ENCODE measurements at regions of chr16 and their contacts with region 1.

Region 1: GRCh38 chr16:80580109-80580832 is 39.5 kb downstream of the DYNLRB2 start:
- DNase-seq: peak; percentile 94
- H3K4me3 Mint-ChIP-seq: peak overlapping the region; percentile 80
- H3K27ac Mint-ChIP-seq: peak overlapping the region; percentile 96
- H3K4me1 Mint-ChIP-seq: peaks cover 58% of the 10 kb centered on the region
- H3K27me3 Mint-ChIP-seq: no peaks in the 10 kb centered on the region

Region 2: GRCh38 chr16:78778101-78779004 is 1801.9 kb before region 1 on chr16:
- intact Hi-C with region 1: loop called (anchors 5 kb)
- DNase-seq: peak; percentile 87
- H3K4me3 Mint-ChIP-seq: peak overlapping the region; percentile 63
- H3K27ac Mint-ChIP-seq: peak overlapping the region; percentile 94
- H3K4me1 Mint-ChIP-seq: peaks cover 53% of the 10 kb centered on the region
- H3K27me3 Mint-ChIP-seq: no peaks in the 10 kb centered on the region

Region 3: GRCh38 chr16:80526425-80527061 is 53.7 kb before region 1 on chr16:
- intact Hi-C with region 1: loop called (anchors 2 kb)
- DNase-seq: peak; percentile 88
- H3K4me3 Mint-ChIP-seq: no peak overlapping the region
- H3K27ac Mint-ChIP-seq: peak overlapping the region; percentile 17
- H3K4me1 Mint-ChIP-seq: peaks cover 15% of the 10 kb centered on the region
- H3K27me3 Mint-ChIP-seq: peaks cover 11% of the 10 kb centered on the region

Region 4: GRCh38 chr16:80557037-80557436 is 23.2 kb before region 1 on chr16:
- intact Hi-C with region 1: no loop called
- DNase-seq: no peak
- H3K4me3 Mint-ChIP-seq: no peak overlapping the region
- H3K27ac Mint-ChIP-seq: no peak overlapping the region
- H3K4me1 Mint-ChIP-seq: peaks cover 19% of the 10 kb centered on the region
- H3K27me3 Mint-ChIP-seq: peaks cover 5% of the 10 kb centered on the region

Region 5: GRCh38 chr16:80591071-80591915 is 11.0 kb after region 1 on chr16:
- intact Hi-C with region 1: loop called (anchors 1 kb)
- DNase-seq: peak; percentile 88
- H3K4me3 Mint-ChIP-seq: peak overlapping the region; percentile 67
- H3K27ac Mint-ChIP-seq: peak overlapping the region; percentile 72
- H3K4me1 Mint-ChIP-seq: peaks cover 41% of the 10 kb centered on the region
- H3K27me3 Mint-ChIP-seq: peaks cover 6% of the 10 kb centered on the region

Region 6: DNA sequence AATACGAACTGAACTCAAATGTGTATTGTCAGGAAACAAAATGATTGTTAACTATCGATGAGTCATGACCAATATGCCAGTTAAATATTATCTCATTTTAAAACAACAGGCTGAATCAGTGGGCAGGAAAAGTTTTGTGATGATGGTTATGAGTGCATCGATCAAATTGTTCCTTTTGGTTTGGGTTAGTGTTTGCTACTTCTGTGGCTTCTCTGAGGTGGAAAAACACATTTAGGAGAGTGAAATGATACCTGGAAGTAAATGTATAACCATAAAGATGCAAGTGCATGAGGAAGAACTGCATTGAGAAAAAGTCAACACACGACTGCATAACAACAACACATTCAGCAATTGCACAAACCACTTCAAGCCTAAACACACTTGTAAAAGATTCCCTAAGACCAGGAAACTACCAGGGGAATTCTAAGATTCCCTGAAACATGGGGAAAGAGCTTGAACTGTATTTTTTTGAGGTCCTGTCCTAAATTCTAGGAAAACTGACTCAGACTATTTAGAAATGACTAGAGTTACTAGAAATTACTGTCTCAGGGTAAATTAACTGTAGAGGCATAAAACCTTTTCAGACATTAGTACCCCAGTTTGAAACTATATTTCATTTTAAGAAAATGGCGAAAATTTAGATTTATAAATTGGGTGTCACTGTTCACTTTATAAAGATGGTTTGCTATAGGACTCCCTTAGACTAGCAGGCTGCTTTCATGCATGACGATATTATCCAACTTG is 179.3 kb after region 1 on chr16:
- intact Hi-C with region 1: loop called (anchors 1 kb)
- DNase-seq: no peak
- H3K4me3 Mint-ChIP-seq: peak overlapping the region; percentile 19
- H3K27ac Mint-ChIP-seq: peak overlapping the region; percentile 85
- H3K4me1 Mint-ChIP-seq: peaks cover 26% of the 10 kb centered on the region
- H3K27me3 Mint-ChIP-seq: no peaks in the 10 kb centered on the region

Region 7: GRCh38 chr16:82192665-82193064 is 1612.4 kb after region 1 on chr16:
- intact Hi-C with region 1: no loop called
- DNase-seq: peak; percentile 77
- H3K4me3 Mint-ChIP-seq: peak overlapping the region; percentile 41
- H3K27ac Mint-ChIP-seq: peak overlapping the region; percentile 89
- H3K4me1 Mint-ChIP-seq: peaks cover 21% of the 10 kb centered on the region
- H3K27me3 Mint-ChIP-seq: peaks cover 7% of the 10 kb centered on the region